Astrocyte of the cerebellum (primary cell): ENCODE measurements at regions of chr6 and their contacts with region 1.

Region 1: GRCh38 chr6:132270726-132271402 is 130.4 kb downstream of the MOXD1 start:
- DNase-seq: no peak
- H3K4me3 ChIP-seq: no peak overlapping the region
- CTCF ChIP-seq: no peak

Region 2: GRCh38 chr6:132219901-132220300 is 51.0 kb before region 1 on chr6:
- in situ Hi-C with region 1: loop called (anchors 5 kb)
- DNase-seq: no peak
- H3K4me3 ChIP-seq: no peak overlapping the region
- CTCF ChIP-seq: no peak

Region 3: GRCh38 chr6:132320007-132320406 is 49.1 kb after region 1 on chr6:
- in situ Hi-C with region 1: no loop called
- DNase-seq: no peak
- H3K4me3 ChIP-seq: no peak overlapping the region
- CTCF ChIP-seq: no peak

Region 4: DNA sequence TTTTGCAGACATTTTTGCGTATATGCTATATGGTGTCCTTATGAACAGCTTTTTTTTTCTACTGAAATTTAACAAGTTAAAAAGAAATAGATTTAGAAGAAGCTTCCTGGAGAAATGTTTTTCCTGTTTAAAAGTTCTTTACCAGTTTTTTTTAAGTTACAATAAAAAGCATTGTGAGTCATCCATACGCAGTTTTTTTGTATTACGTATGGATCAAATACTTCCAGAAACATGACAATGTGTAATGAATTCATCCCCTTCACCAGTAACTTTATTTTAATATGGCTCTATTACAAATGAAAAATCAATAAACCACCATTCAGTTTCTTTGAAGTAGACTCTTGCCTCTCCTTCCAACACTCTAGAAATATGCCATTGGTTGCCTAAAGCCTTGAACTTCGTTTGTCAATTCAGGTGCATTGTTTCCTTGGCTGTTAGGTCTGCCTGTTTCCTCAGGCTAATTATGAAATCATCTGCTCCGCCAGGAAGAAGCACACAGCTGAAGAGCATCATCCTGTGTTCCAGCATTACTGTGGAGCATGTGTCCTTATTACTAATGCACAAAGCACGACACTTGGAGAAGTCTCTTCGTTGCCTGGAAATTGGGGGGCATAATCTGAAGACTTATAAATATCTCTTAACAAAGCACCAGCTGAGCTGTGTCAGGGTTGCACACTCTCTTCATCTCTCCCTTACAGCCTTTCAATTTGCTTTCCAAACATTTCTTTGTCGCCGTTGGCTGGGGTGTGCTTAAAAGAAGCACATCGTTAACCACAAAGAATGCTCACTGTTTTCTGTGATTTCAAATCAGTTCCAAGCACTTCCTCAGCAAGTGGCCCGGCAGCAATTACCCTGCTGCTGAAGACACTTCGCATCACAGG is 120.8 kb after region 1 on chr6:
- in situ Hi-C with region 1: no loop called
- DNase-seq: peak; percentile 36
- H3K4me3 ChIP-seq: peak overlapping the region; percentile 18
- CTCF ChIP-seq: no peak